ENCODE measurements at regions of chr6 and their contacts with region 1.

Region 1: GRCh38 chr6:52027699-52028098 is 59.7 kb downstream of the PKHD1 start:
- DNase-seq: no peak
- ATAC-seq: no peak
- H3K4me3 ChIP-seq: no peak overlapping the region
- H3K27ac ChIP-seq: no peak overlapping the region
- H3K4me1 ChIP-seq: no peaks in the 10 kb centered on the region
- H3K27me3 ChIP-seq: no peaks in the 10 kb centered on the region; a peak in 2 of 4 replicates
- CTCF ChIP-seq: no peak
- EP300 ChIP-seq: no peak
- POLR2A ChIP-seq: no peak
- RAD21 ChIP-seq: no peak

Region 2: GRCh38 chr6:52049252-52050050 is 21.8 kb after region 1 on chr6:
- CTCF ChIA-PET with region 1: interaction called, 44 read pairs
- POLR2A ChIA-PET with region 1: no interaction called
- RAD21 ChIA-PET with region 1: interaction called, 3 read pairs
- SMC1A ChIA-PET with region 1: interaction called, 51 read pairs
- in situ Hi-C with region 1: no loop called
- intact Hi-C with region 1: no loop called
- DNase-seq: peak; percentile 11
- ATAC-seq: peak; percentile 75
- H3K4me3 ChIP-seq: no peak overlapping the region
- H3K27ac ChIP-seq: no peak overlapping the region
- H3K4me1 ChIP-seq: no peaks in the 10 kb centered on the region
- H3K27me3 ChIP-seq: peaks cover 0 to 8% of the 10 kb centered on the region in 2 experiments; a peak in 2 of 4 replicates
- CTCF ChIP-seq: peak; percentile 56 to 70 (median 62)
- EP300 ChIP-seq: no peak
- POLR2A ChIP-seq: no peak
- RAD21 ChIP-seq: peak; percentile 67

Region 3: DNA sequence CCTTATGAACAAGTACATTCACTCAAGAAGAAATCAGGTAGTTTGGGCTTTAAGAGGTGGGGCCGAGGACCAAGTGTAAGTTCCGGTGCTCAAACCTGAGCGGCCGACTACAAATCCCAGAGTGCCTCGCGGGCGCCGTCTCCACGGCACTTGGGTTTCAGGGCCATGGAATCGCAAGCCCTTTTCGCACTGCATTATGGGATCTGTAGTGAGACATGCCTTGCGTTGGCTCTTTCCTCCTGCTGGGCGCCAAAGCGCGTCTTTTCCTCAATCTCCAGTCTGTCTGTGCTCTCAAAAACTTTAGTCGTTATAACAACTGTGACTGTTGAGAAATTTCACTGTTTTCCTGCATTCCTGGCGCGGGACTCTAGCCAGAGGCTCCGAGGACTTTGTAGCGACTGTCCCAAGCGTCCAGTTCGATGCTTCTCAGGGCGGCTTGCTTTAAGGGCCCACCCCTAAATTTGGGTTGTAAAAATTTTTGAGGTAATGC is 1037.1 kb after region 1 on chr6:
- CTCF ChIA-PET with region 1: no interaction called
- POLR2A ChIA-PET with region 1: no interaction called
- RAD21 ChIA-PET with region 1: no interaction called
- SMC1A ChIA-PET with region 1: no interaction called
- in situ Hi-C with region 1: no loop called
- intact Hi-C with region 1: no loop called
- DNase-seq: peak; percentile 91
- ATAC-seq: peak; percentile 81
- H3K4me3 ChIP-seq: peak overlapping the region; percentile 85
- H3K27ac ChIP-seq: peak overlapping the region; percentile 78
- H3K4me1 ChIP-seq: peaks cover 9% of the 10 kb centered on the region; the same call in 1 of the 2 replicates
- H3K27me3 ChIP-seq: no peaks in the 10 kb centered on the region
- CTCF ChIP-seq: 0 out of 6 replicates have a peak, but pooled peaks of 1 of the 3 experiments have one; percentile 4
- EP300 ChIP-seq: no peak
- POLR2A ChIP-seq: no peak
- RAD21 ChIP-seq: no peak

Measured in GM12878 (cell line).